A549 (cell line): ENCODE measurements at regions of chr4 and their contacts with region 1.

Region 1: GRCh38 chr4:54233277-54233696 is 4.2 kb downstream of the PDGFRA start:
- DNase-seq: peak; percentile 69 to 84
- ATAC-seq: peak; percentile 87 to 90
- H3K4me3 ChIP-seq: peak overlapping the region; percentile 52
- H3K27ac ChIP-seq: peak overlapping the region; percentile 43 to 75; a peak in 4 of 6 replicates
- H3K4me1 ChIP-seq: no peaks in the 10 kb centered on the region
- CTCF ChIP-seq: peak; percentile 48
- EP300 ChIP-seq: no peak
- POLR2A ChIP-seq: no peak
- RAD21 ChIP-seq: peak; percentile 66 to 81

Region 2: GRCh38 chr4:52376132-52376704 is 1857.1 kb before region 1 on chr4:
- CTCF ChIA-PET with region 1: interaction called, 15 read pairs
- POLR2A ChIA-PET with region 1: no interaction called
- DNase-seq: peak; percentile 5 to 30
- ATAC-seq: no peak
- H3K4me3 ChIP-seq: no peak overlapping the region
- H3K27ac ChIP-seq: no peak overlapping the region
- H3K4me1 ChIP-seq: no peaks in the 10 kb centered on the region
- CTCF ChIP-seq: peak; percentile 50
- EP300 ChIP-seq: no peak
- POLR2A ChIP-seq: no peak
- RAD21 ChIP-seq: peak; percentile 56 to 66

Region 3: DNA sequence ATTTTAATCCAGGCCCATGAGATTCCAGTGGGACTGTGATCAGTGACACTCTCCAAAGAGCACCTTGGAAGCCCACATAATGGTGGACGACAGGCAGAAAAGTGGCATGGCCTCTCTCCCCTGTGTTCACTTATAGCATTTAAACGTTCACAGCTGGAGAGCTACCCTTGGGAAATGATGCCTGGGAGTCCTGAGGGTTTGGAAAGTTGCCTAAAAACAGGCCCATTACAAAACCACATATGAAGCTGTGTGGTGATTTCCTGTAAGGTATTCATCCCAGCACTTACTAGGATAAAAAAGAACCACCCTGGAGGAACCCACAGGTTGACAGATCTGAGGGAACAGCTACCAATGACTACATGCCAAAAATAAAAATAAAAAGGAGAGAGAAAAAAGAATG is 1178.0 kb before region 1 on chr4:
- CTCF ChIA-PET with region 1: interaction called, 10 read pairs
- POLR2A ChIA-PET with region 1: no interaction called
- DNase-seq: no peak
- ATAC-seq: no peak
- H3K4me3 ChIP-seq: no peak overlapping the region
- H3K27ac ChIP-seq: no peak overlapping the region
- H3K4me1 ChIP-seq: no peaks in the 10 kb centered on the region
- CTCF ChIP-seq: no peak
- EP300 ChIP-seq: no peak
- POLR2A ChIP-seq: no peak
- RAD21 ChIP-seq: no peak

Region 4: GRCh38 chr4:53706422-53707032 is 526.8 kb before region 1 on chr4:
- CTCF ChIA-PET with region 1: interaction called, 23 read pairs
- POLR2A ChIA-PET with region 1: no interaction called
- DNase-seq: peak; percentile 5 to 46
- ATAC-seq: peak in 1 of 2 experiments; percentile 52; a peak in 3 of 6 replicates
- H3K4me3 ChIP-seq: no peak overlapping the region
- H3K27ac ChIP-seq: no peak overlapping the region
- H3K4me1 ChIP-seq: peaks cover 27% of the 10 kb centered on the region
- CTCF ChIP-seq: peak; percentile 53
- EP300 ChIP-seq: no peak
- POLR2A ChIP-seq: no peak
- RAD21 ChIP-seq: peak; percentile 49 to 62

Region 5: GRCh38 chr4:53914313-53915016 is 318.8 kb before region 1 on chr4:
- CTCF ChIA-PET with region 1: interaction called, 52 read pairs
- POLR2A ChIA-PET with region 1: no interaction called
- DNase-seq: peak; percentile 21 to 73
- ATAC-seq: peak; percentile 84 to 92
- H3K4me3 ChIP-seq: no peak overlapping the region
- H3K27ac ChIP-seq: peak overlapping the region; percentile 60 to 61; a peak in 5 of 6 replicates
- H3K4me1 ChIP-seq: peaks cover 19% of the 10 kb centered on the region
- CTCF ChIP-seq: no peak
- EP300 ChIP-seq: peak; percentile 31; a peak in 2 of 5 replicates
- POLR2A ChIP-seq: no peak
- RAD21 ChIP-seq: no peak

Region 6: DNA sequence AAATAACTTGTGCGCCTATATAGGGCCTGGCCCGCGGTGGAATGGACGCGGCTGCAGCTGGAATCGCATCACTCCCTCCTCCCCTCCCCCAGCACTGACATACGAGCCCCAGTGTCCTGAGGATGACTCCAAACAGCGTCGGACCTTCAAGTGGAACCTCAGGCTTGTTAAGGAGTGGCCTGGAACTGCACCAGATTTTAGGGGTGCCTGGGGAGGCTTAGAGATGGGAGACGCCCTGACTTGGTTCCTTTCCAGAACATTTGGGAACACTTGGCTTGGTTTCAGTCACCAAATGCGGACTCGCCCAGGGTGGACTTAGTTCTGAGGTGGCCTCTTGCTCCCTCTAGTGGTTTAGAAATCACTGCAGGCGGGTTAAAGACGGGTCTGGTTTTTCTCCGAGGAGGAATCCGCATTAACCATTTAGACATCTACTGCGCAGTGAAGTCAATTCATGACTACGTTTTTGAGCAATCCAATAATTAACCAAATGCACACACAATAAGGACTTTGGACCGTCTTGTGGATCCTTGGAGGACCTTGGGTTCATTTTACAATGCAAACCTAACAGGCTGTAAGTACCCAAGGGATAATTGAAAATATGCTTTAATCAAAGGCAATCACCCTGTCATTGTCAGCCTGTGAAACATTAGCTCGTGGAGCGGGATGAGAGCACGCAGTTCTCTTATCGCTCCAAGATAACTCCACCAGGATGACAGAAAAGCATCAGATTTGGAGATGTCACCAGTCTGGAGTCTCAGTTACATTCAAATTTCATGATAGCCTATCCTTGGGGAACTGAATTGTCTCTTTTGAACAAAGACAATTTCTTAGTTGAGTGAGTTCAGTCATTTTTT is 15.4 kb before region 1 on chr4:
- CTCF ChIA-PET with region 1: interaction called, 23 read pairs
- POLR2A ChIA-PET with region 1: no interaction called
- DNase-seq: peak; percentile 61 to 72
- ATAC-seq: peak; percentile 93 to 97
- H3K4me3 ChIP-seq: peak overlapping the region; percentile 45
- H3K27ac ChIP-seq: peak overlapping the region; percentile 64 to 76
- H3K4me1 ChIP-seq: 0 out of 3 replicates have a peak, but pooled peaks cover 4% of the 10 kb centered on the region
- CTCF ChIP-seq: peak; percentile 75
- EP300 ChIP-seq: no peak
- POLR2A ChIP-seq: no peak
- RAD21 ChIP-seq: peak; percentile 87 to 91

Region 7: GRCh38 chr4:54359919-54360650 is 126.8 kb after region 1 on chr4:
- CTCF ChIA-PET with region 1: no interaction called
- POLR2A ChIA-PET with region 1: no interaction called
- DNase-seq: no peak
- ATAC-seq: no peak
- H3K4me3 ChIP-seq: no peak overlapping the region
- H3K27ac ChIP-seq: no peak overlapping the region
- H3K4me1 ChIP-seq: no peaks in the 10 kb centered on the region
- CTCF ChIP-seq: no peak
- EP300 ChIP-seq: no peak
- POLR2A ChIP-seq: no peak
- RAD21 ChIP-seq: no peak